MCF 10A (cell line): ENCODE measurements at regions of chr5 and their contacts with region 1.

Region 1: GRCh38 chr5:126538579-126538978 is 56.4 kb downstream of the ALDH7A1 start:
- DNase-seq: no peak
- H3K4me3 Mint-ChIP-seq: no peak overlapping the region
- H3K27ac Mint-ChIP-seq: peak overlapping the region; percentile 25
- H3K4me1 Mint-ChIP-seq: peaks cover 8% of the 10 kb centered on the region
- H3K27me3 Mint-ChIP-seq: no peaks in the 10 kb centered on the region
- CTCF ChIP-seq: no peak

Region 2: GRCh38 chr5:126178521-126178920 is 360.1 kb before region 1 on chr5:
- CTCF ChIA-PET with region 1: no interaction called
- POLR2A ChIA-PET with region 1: no interaction called
- intact Hi-C with region 1: no loop called
- DNase-seq: no peak
- H3K4me3 Mint-ChIP-seq: no peak overlapping the region
- H3K27ac Mint-ChIP-seq: no peak overlapping the region
- H3K4me1 Mint-ChIP-seq: no peaks in the 10 kb centered on the region
- H3K27me3 Mint-ChIP-seq: no peaks in the 10 kb centered on the region
- CTCF ChIP-seq: no peak

Region 3: DNA sequence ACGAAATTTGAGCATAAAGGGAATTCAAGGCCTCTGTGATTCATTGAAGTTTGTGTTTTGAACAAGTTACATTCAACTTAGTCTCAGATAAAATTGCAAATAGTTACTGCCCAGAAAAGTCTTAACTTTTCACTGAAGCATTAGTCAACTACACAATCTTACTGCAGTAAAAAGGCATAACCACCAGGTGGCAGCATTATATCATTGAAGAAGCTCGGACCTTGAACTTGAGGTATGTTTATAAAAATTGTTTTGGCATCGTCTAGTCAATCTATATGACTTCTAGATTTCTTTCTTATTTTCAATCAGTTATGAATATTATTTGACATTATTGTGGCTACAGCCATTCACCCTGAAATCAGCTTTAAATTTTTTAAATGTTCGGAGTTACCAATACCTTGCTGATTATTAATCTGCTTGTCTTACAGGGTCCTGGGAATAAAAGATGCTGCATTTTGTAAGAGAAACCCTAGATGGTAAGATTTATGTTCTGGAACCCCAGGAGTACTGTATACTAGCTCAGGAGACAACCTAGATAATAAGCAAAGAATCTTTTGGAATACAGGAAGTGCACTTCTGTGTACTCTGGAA is 199.3 kb before region 1 on chr5:
- CTCF ChIA-PET with region 1: interaction called, 61 read pairs
- POLR2A ChIA-PET with region 1: interaction called, 7 read pairs
- intact Hi-C with region 1: loop called (anchors 1 kb)
- DNase-seq: peak; percentile 86
- H3K4me3 Mint-ChIP-seq: no peak overlapping the region
- H3K27ac Mint-ChIP-seq: no peak overlapping the region
- H3K4me1 Mint-ChIP-seq: peaks cover 5% of the 10 kb centered on the region
- H3K27me3 Mint-ChIP-seq: no peaks in the 10 kb centered on the region
- CTCF ChIP-seq: peak; percentile 85

Region 4: DNA sequence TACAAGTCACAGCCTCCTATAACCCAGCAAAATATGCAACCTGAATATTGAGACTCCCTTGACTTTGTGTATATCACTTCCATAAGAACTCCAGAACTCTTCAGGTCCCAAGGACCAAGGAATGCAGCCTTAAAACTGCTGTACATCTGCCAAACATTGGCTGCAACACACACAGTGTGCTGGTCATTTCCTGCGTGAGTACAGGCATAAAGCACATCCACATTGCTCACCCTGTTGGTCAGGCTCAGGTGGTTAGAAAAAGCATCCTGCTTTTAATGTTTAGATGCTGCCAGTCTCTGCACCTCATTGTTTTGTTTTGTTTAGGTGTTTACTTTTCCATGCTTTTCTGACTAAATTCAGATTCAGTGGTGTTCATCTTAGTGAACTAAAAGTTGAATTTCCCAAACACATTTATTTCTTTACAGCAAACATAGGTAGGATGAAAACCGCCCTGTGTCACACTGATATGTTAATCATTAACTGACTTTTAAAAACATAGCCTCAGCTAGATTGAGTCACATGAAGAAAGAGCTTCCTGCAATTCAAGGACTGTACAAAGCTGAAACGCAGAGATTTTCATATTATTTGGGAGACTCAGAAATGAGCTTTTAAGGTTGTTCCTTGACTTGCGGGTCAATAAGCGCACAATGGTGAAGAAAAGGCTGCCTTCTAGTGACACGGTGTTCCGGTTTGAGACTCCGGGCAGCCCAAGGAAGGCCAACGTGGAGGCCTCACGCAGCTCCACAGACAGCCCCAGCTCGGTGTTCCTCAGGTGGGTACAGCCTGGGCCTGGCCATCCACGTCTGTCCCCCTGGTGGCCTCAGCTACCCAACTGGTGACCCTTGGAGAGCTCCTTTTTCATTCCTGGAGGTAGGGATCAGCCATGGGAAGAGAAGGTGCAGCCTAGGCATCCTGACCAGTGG is 167.5 kb before region 1 on chr5:
- CTCF ChIA-PET with region 1: interaction called, 10 read pairs
- POLR2A ChIA-PET with region 1: no interaction called
- intact Hi-C with region 1: no loop called
- DNase-seq: peak; percentile 50
- H3K4me3 Mint-ChIP-seq: no peak overlapping the region
- H3K27ac Mint-ChIP-seq: no peak overlapping the region
- H3K4me1 Mint-ChIP-seq: peaks cover 27% of the 10 kb centered on the region
- H3K27me3 Mint-ChIP-seq: no peaks in the 10 kb centered on the region
- CTCF ChIP-seq: peak; percentile 7

Region 5: DNA sequence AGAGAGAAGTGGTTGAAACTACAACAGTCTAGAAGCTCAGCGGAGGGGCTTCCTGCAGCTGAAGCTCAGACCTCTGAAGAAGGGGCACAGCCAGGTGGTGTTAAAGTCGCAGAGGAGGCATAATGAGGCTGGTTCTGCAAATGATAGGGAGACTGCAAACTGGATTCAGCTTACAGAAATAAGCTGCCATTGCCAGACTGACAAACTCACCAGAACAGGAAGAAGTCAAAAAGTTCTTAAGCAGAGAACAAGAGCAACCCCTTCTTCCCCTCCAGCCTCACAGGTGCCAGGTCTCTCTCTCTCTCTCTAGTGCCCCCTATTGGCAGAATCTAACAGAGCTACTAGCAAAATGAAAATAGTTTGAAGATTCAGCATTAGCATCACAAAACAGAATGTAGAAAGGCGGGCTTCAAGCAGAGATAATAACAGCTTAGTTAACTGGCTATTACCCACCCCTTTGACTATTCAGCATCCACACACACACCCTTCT is 38.7 kb before region 1 on chr5:
- CTCF ChIA-PET with region 1: interaction called, 23 read pairs
- POLR2A ChIA-PET with region 1: no interaction called
- intact Hi-C with region 1: no loop called
- DNase-seq: peak; percentile 62
- H3K4me3 Mint-ChIP-seq: no peak overlapping the region
- H3K27ac Mint-ChIP-seq: no peak overlapping the region
- H3K4me1 Mint-ChIP-seq: peaks cover 28% of the 10 kb centered on the region
- H3K27me3 Mint-ChIP-seq: no peaks in the 10 kb centered on the region
- CTCF ChIP-seq: peak; percentile 51